PC-3 (cell line): ENCODE measurements at regions of chr9 and their contacts with region 1.

Region 1: GRCh38 chr9:35470894-35471293 is 19.0 kb upstream of the RUSC2 start:
- DNase-seq: peak; percentile 86
- ATAC-seq: peak; percentile 97
- H3K4me3 ChIP-seq: peak overlapping the region; percentile 24; the same call in 1 of the 2 replicates
- H3K27ac ChIP-seq: peak overlapping the region; percentile 92
- H3K4me1 ChIP-seq: peaks cover 25% of the 10 kb centered on the region
- H3K27me3 ChIP-seq: no peaks in the 10 kb centered on the region
- CTCF ChIP-seq: no peak

Region 2: GRCh38 chr9:35272989-35273388 is 197.9 kb before region 1 on chr9:
- CTCF ChIA-PET with region 1: no interaction called
- POLR2A ChIA-PET with region 1: no interaction called
- intact Hi-C with region 1: loop called (anchors 5 kb)
- DNase-seq: peak; percentile 66
- ATAC-seq: peak; percentile 87
- H3K4me3 ChIP-seq: no peak overlapping the region
- H3K27ac ChIP-seq: peak overlapping the region; percentile 50
- H3K4me1 ChIP-seq: peaks cover 19% of the 10 kb centered on the region
- H3K27me3 ChIP-seq: no peaks in the 10 kb centered on the region
- CTCF ChIP-seq: no peak

Region 3: DNA sequence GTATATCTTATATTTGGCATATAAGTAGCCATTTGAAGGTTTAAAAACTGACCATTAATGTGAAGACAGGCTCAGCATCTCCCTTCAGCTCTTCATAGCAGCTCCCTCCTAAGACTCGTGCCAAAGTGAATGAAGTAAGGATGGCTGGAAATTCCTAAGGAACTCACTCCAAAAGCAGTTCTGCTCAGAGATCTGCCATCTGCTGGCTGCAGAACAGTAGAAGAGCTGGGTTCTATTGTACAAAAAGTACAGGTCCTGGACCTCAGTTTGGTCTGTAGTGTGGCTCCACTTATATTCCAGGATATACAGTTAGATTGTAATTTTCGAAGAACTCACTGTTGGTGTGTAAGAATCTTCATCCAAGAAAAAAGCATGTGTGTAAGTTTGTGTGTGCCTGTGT is 85.9 kb before region 1 on chr9:
- CTCF ChIA-PET with region 1: no interaction called
- POLR2A ChIA-PET with region 1: no interaction called
- intact Hi-C with region 1: loop called (anchors 10 kb)
- DNase-seq: peak; percentile 20
- ATAC-seq: peak; percentile 15; the same call in 1 of the 2 replicates
- H3K4me3 ChIP-seq: no peak overlapping the region
- H3K27ac ChIP-seq: no peak overlapping the region
- H3K4me1 ChIP-seq: no peaks in the 10 kb centered on the region
- H3K27me3 ChIP-seq: no peaks in the 10 kb centered on the region
- CTCF ChIP-seq: peak; percentile 37

Region 4: GRCh38 chr9:35423499-35423898 is 47.4 kb before region 1 on chr9:
- CTCF ChIA-PET with region 1: no interaction called
- POLR2A ChIA-PET with region 1: no interaction called
- intact Hi-C with region 1: loop called (anchors 2 kb)
- DNase-seq: peak; percentile 63
- ATAC-seq: peak; percentile 82
- H3K4me3 ChIP-seq: no peak overlapping the region
- H3K27ac ChIP-seq: peak overlapping the region; percentile 93
- H3K4me1 ChIP-seq: peaks cover 39% of the 10 kb centered on the region
- H3K27me3 ChIP-seq: no peaks in the 10 kb centered on the region
- CTCF ChIP-seq: no peak